ENCODE measurements at regions of chr15 and their contacts with region 1.

Region 1: GRCh38 chr15:39976291-39977274 is 42.7 kb downstream of the EIF2AK4 start:
- DNase-seq: peak; percentile 63 to 82 (median 74)
- ATAC-seq: peak; percentile 76 to 94 (median 92)
- H3K4me3 ChIP-seq: peak overlapping the region; percentile 12 to 78 (median 58)
- H3K27ac ChIP-seq: peak overlapping the region in 10 of 12 donors; percentile 44 to 88 (median 76)
- H3K4me1 ChIP-seq: peaks cover 0 to 14% (median 5%) of the 10 kb centered on the region in 12 donors
- H3K27me3 ChIP-seq: no peaks in the 10 kb centered on the region
- CTCF ChIP-seq: peak in 10 of 12 donors; percentile 10 to 73 (median 58)
- POLR2A ChIP-seq: no peak

Region 2: GRCh38 chr15:39686000-39686613 is 290.5 kb before region 1 on chr15:
- intact Hi-C with region 1: loop called in 1 of 10 experiments (anchors 10 kb)
- DNase-seq: peak in 2 of 5 donors; percentile 21 to 31
- ATAC-seq: peak in 3 of 4 donors; percentile 48 to 76 (median 64)
- H3K4me3 ChIP-seq: no peak overlapping the region
- H3K27ac ChIP-seq: no peak overlapping the region
- H3K4me1 ChIP-seq: peaks cover 0 to 6% (median 0%) of the 10 kb centered on the region in 12 donors
- H3K27me3 ChIP-seq: no peaks in the 10 kb centered on the region
- CTCF ChIP-seq: peak; percentile 69 to 86 (median 76)
- POLR2A ChIP-seq: no peak

Region 3: GRCh38 chr15:39788108-39788507 is 188.5 kb before region 1 on chr15:
- intact Hi-C with region 1: loop called (anchors 2 to 10 kb)
- DNase-seq: no peak
- ATAC-seq: no peak
- H3K4me3 ChIP-seq: no peak overlapping the region
- H3K27ac ChIP-seq: no peak overlapping the region
- H3K4me1 ChIP-seq: peaks cover 0 to 29% (median 14%) of the 10 kb centered on the region in 12 donors
- H3K27me3 ChIP-seq: no peaks in the 10 kb centered on the region
- CTCF ChIP-seq: no peak
- POLR2A ChIP-seq: no peak

Region 4: GRCh38 chr15:39887832-39888231 is 88.8 kb before region 1 on chr15:
- intact Hi-C with region 1: loop called in 2 of 10 experiments (anchors 10 kb)
- DNase-seq: no peak
- ATAC-seq: peak in 1 of 4 donors; percentile 52
- H3K4me3 ChIP-seq: no peak overlapping the region
- H3K27ac ChIP-seq: no peak overlapping the region
- H3K4me1 ChIP-seq: no peaks in the 10 kb centered on the region
- H3K27me3 ChIP-seq: peaks cover 0 to under 1% (median 0%) of the 10 kb centered on the region in 9 donors
- CTCF ChIP-seq: peak in 7 of 12 donors; percentile 7 to 42 (median 31)
- POLR2A ChIP-seq: no peak

Region 5: GRCh38 chr15:39934397-39935071 is 42.0 kb before region 1 on chr15:
- intact Hi-C with region 1: loop called in 1 of 10 experiments (anchors 5 kb)
- DNase-seq: no peak
- ATAC-seq: peak in 1 of 4 donors; percentile 4
- H3K4me3 ChIP-seq: peak overlapping the region; percentile 39 to 93 (median 81)
- H3K27ac ChIP-seq: peak overlapping the region; percentile 64 to 97 (median 84)
- H3K4me1 ChIP-seq: peaks cover 0 to 51% (median 28%) of the 10 kb centered on the region in 12 donors
- H3K27me3 ChIP-seq: no peaks in the 10 kb centered on the region
- CTCF ChIP-seq: no peak
- POLR2A ChIP-seq: no peak

Region 6: DNA sequence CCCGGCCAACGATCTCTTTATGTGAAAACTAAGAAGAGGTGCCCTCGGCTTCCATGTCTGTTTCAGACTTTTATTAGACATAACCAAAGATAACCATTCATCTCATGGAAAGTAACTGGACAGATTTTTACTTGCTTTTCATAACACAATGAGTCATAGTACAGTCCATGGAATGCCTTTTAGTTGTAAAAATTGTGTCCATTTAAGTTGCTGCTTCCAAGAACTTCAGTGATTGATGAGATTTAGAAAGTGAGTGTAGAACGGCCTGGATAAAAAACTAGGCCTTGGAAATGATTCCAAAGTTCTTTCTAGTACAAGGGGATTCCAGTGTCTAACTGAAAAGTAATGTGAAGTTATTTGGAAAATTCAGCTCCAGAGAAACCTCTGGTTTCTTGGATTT is 31.9 kb before region 1 on chr15:
- intact Hi-C with region 1: no loop called
- DNase-seq: no peak
- ATAC-seq: no peak
- H3K4me3 ChIP-seq: no peak overlapping the region
- H3K27ac ChIP-seq: no peak overlapping the region
- H3K4me1 ChIP-seq: peaks cover 0 to 9% (median under 1%) of the 10 kb centered on the region in 12 donors
- H3K27me3 ChIP-seq: no peaks in the 10 kb centered on the region
- CTCF ChIP-seq: no peak
- POLR2A ChIP-seq: no peak

Region 7: DNA sequence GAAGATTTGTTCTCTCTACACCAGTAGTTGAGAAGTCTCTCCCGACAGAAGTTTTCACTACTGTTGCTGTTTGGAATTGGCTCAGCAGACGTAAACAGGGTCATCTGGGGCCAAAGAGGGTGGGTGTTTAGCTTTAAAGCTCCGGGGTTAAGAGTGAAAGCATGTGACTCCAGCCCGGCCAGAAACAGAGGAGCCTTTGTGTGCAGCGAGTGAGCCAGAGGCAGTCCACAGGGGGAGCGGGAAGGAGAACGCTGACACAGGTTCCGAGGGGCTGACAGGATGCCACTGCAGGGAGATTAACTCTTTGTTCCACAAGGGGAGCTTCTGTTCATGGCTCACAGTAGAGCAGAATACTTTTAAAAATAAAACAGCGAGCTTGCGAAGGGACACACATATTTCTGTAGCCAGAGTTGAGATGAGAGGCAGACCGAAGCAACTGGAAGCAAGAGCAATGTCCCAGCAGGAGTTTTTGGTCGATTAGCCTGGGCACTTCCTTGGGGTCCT is 105.2 kb after region 1 on chr15:
- intact Hi-C with region 1: no loop called
- DNase-seq: peak; percentile 75 to 86 (median 83)
- ATAC-seq: peak; percentile 90 to 97 (median 95)
- H3K4me3 ChIP-seq: peak overlapping the region in 10 of 12 donors; percentile 11 to 58 (median 46)
- H3K27ac ChIP-seq: peak overlapping the region; percentile 58 to 92 (median 74)
- H3K4me1 ChIP-seq: peaks cover 0 to 37% (median 23%) of the 10 kb centered on the region in 12 donors
- H3K27me3 ChIP-seq: no peaks in the 10 kb centered on the region
- CTCF ChIP-seq: peak in 3 of 12 donors; percentile 25 to 35 (median 26)
- POLR2A ChIP-seq: peak in 1 of 2 donors; percentile 41